ENCODE measurements at regions of chr7 and their contacts with region 1.

Region 1: DNA sequence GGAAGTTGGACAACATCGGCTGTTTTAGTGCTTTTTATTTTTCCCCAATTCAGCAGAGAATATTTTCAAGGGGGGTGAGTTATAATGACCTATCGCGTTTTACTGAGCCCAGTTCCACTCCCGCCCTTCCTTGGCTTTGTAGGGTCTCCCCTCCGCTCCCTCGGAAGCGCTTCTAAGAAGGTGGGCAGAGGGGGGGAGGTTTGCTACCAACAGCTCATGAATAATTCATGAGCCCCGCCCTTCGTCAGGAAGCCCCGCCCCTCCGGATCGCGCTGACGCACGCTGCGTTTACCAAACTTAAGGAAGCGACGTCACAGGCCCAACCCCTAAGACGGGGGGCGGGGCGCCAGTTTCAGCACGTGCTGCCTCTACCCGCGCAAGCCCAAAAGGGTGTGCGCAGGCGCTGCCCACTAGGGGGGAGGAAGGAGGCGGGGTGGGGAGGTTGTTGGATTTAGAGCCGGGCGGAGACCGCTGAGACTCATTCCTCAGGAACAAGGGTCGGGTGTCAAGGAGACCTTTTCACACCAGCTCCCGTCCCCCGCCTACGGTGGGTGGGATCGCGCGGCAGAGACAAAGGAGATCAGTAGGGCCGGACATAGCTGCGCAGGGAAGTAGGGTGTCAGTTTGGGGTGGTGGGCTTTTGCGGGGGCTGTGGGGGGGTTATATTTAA is 529 bp upstream of the MEPCE start:
- DNase-seq: peak; percentile 100
- H3K4me3 Mint-ChIP-seq: peak overlapping the region; percentile 98
- H3K27ac Mint-ChIP-seq: peak overlapping the region; percentile 100
- H3K4me1 Mint-ChIP-seq: peaks cover 46% of the 10 kb centered on the region
- H3K27me3 Mint-ChIP-seq: peaks cover 8% of the 10 kb centered on the region

Region 2: DNA sequence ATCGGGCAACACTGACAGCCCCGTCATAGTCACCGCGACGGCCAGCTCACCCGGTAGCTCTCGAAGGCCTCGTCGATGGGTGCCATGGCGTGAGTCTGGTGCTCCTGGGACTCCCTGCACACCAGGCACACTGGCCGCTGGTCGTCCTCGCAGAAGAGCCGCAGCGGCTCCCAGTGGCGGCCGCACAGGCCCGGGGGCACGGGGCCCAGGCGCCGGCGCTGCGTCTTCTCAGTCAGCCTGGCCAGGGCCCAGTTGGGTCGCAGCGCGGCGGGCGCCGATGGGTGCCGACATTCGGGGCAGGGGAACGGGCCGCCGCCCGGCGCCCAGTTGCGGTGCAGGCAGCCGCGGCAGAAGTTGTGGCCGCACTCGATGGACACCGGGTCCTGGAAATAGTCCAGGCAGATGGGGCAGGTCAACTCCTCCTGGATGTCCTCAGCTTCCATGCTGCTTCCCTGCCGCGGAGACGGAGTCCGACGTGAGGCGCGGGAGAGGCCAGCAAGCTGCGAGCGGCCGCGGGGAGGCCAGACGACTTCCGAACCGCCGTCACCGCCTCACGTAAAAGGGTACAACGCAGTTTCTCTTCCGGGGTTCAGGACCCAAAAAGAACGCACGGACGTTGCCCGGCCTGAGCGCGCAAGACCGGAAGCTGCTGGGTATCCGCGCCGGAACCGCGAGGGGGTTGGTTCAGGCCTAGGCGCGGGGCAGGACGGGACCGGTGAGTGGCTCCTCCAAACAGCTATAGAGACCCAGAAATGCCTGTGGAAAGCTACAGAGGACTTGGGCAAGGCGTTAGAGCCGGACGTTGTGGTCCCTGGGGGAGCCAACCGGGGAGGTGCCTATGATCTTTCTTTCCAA is 509.9 kb before region 1 on chr7 and contains the start of gene TRIM4:
- CTCF ChIA-PET with region 1: no interaction called
- POLR2A ChIA-PET with region 1: no interaction called
- intact Hi-C with region 1: loop called (anchors 1 kb)
- DNase-seq: peak; percentile 96
- H3K4me3 Mint-ChIP-seq: peak within 1 kb of the TSS; percentile 98
- H3K27ac Mint-ChIP-seq: peak within 1 kb of the TSS; percentile 98
- H3K4me1 Mint-ChIP-seq: peaks cover 43% of the 10 kb centered on the region
- H3K27me3 Mint-ChIP-seq: no peaks in the 10 kb centered on the region
- total RNA-seq, gene TRIM4: 24.9 to 26.1 TPM

Region 3: GRCh38 chr7:100148559-100149350 is 280.3 kb before region 1 on chr7 and contains the start of gene LAMTOR4:
- CTCF ChIA-PET with region 1: no interaction called
- POLR2A ChIA-PET with region 1: interaction called, 3 read pairs
- intact Hi-C with region 1: loop called (anchors 1 kb)
- DNase-seq: peak; percentile 99
- H3K4me3 Mint-ChIP-seq: peak within 1 kb of the TSS; percentile 95
- H3K27ac Mint-ChIP-seq: peak within 1 kb of the TSS; percentile 94
- H3K4me1 Mint-ChIP-seq: peaks cover 25% of the 10 kb centered on the region
- H3K27me3 Mint-ChIP-seq: no peaks in the 10 kb centered on the region
- total RNA-seq, gene LAMTOR4: 136 to 151 TPM

Region 4: GRCh38 chr7:100444311-100445278 is 15.5 kb after region 1 on chr7:
- CTCF ChIA-PET with region 1: no interaction called
- POLR2A ChIA-PET with region 1: interaction called, 15 read pairs
- intact Hi-C with region 1: no loop called
- DNase-seq: peak; percentile 47
- H3K4me3 Mint-ChIP-seq: no peak overlapping the region
- H3K27ac Mint-ChIP-seq: peak overlapping the region; percentile 72
- H3K4me1 Mint-ChIP-seq: peaks cover 12% of the 10 kb centered on the region
- H3K27me3 Mint-ChIP-seq: no peaks in the 10 kb centered on the region

Region 5: GRCh38 chr7:100611974-100612729 is 183.1 kb after region 1 on chr7 and contains the start of gene MOSPD3:
- CTCF ChIA-PET with region 1: no interaction called
- POLR2A ChIA-PET with region 1: interaction called, 3 read pairs
- intact Hi-C with region 1: loop called (anchors 1 kb)
- DNase-seq: peak; percentile 98
- H3K4me3 Mint-ChIP-seq: peak within 1 kb of the TSS; percentile 90
- H3K27ac Mint-ChIP-seq: peak within 1 kb of the TSS; percentile 98
- H3K4me1 Mint-ChIP-seq: peaks cover 14% of the 10 kb centered on the region
- H3K27me3 Mint-ChIP-seq: no peaks in the 10 kb centered on the region
- total RNA-seq, gene MOSPD3: 14.0 to 14.4 TPM